Psoas muscle (tissue), 8 donors: ENCODE measurements at regions of chr18 and their contacts with region 1.

Region 1: GRCh38 chr18:23578891-23579653 is 7.2 kb downstream of the NPC1 start:
- DNase-seq: no peak
- ATAC-seq: peak in 2 of 4 donors; percentile 31 to 67
- H3K4me3 ChIP-seq: no peak overlapping the region
- H3K27ac ChIP-seq: no peak overlapping the region
- H3K4me1 ChIP-seq: peaks cover 24% of the 10 kb centered on the region
- H3K27me3 ChIP-seq: no peaks in the 10 kb centered on the region
- CTCF ChIP-seq: no peak

Region 2: DNA sequence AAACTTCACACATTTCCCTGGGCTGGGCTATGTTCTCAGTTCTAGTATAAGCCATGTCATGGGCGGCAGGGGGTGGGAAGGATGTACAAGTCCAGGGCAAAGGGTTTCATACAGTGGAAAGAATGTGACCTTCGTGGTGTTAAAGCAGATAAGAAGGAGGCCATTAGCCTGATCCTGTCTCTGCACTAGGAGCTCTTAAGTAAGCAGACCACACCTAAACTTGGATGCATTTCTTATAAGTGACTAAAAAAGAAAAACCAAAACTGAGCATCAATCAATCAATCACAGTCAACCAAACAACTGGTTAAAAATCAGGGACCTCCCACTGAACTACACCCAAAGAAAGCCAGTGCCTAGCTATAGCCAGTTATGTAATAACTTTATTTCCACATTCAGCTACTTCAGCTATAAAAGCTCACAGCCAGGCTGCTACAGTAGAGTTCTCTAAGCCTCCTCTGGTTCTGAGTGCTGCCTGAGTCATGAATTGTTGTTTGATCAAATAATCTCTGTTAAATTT is 172.7 kb before region 1 on chr18:
- intact Hi-C with region 1: no loop called
- DNase-seq: no peak
- ATAC-seq: no peak
- H3K4me3 ChIP-seq: no peak overlapping the region
- H3K27ac ChIP-seq: no peak overlapping the region
- H3K4me1 ChIP-seq: no peaks in the 10 kb centered on the region
- H3K27me3 ChIP-seq: no peaks in the 10 kb centered on the region
- CTCF ChIP-seq: no peak

Region 3: DNA sequence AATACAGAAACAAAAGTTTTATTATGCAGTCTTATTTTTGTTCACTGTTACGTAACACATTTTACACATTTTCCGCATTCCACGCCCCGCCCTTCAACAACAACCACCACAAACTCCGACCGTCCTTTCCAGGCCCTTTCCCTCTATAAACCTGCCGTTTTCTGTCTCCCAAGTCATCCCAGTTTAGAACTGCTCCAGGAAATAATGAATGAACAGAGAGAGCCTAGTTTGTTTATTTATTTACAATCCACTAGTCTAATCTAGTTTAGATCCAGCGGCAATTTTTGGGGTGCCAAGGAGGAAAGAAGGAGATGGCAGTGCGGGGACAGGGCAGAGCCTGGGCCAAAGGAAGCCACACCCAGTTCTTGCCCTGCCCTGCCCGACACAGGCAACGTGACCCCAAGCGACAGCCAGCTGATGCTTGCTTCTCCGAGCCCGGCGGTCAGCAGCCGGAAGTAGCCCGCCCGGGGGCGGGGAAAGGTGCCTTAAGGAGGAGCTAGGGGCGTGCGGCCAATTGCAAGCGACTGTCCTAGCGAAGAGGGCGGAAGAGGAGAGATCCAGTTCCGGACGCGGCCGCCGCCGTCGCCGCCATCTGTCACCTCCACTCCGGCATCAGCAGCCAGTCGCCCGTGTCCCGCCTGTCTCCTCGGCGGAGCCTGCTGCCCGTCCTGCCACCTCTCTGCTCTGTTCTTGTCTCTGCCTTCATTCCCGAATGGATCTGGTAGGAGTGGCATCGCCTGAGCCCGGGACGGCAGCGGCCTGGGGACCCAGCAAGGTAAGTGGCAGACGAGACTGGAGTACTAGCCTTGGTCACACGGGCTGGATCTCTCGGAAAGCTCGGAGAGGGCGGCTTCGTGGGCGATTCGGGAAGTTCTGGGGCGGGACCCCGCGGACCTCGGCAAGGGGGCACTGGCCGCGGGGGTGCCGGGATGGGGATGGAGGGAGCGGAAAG is 126.1 kb before region 1 on chr18 and contains the start of gene RIOK3:
- intact Hi-C with region 1: loop called in 1 of 2 experiments (anchors 5 kb)
- DNase-seq: peak; percentile 99
- ATAC-seq: peak; percentile 98 to 99 (median 99)
- H3K4me3 ChIP-seq: peak within 1 kb of the TSS; percentile 84
- H3K27ac ChIP-seq: peak within 1 kb of the TSS; percentile 95
- H3K4me1 ChIP-seq: peaks cover 43% of the 10 kb centered on the region
- H3K27me3 ChIP-seq: no peaks in the 10 kb centered on the region
- CTCF ChIP-seq: no peak
- total RNA-seq, gene RIOK3: 78.6 to 116 (median 89.1) TPM

Region 4: DNA sequence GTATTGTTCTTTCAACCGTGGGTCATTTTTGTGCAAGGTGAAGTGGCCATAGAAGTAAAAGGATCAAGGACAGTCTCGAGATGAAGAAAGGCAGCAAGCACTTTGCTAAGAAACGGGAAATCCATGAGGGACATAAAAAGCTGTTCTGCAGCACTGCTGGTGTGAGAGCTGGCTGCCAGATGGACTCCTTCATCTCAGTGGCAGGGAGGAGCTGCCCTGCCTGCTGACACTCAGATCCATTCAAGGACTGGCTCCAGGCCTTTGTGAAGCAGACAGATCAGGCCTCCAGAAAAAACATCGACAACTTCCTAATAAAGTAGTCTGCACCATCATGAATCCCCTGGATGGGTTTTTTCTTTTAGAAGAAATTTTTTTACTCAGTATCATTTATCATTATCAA is 46.2 kb before region 1 on chr18:
- intact Hi-C with region 1: loop called in 1 of 2 experiments (anchors 5 kb)
- DNase-seq: no peak
- ATAC-seq: no peak
- H3K4me3 ChIP-seq: no peak overlapping the region
- H3K27ac ChIP-seq: no peak overlapping the region
- H3K4me1 ChIP-seq: no peaks in the 10 kb centered on the region
- H3K27me3 ChIP-seq: no peaks in the 10 kb centered on the region
- CTCF ChIP-seq: no peak

Region 5: GRCh38 chr18:23596183-23596582 is 17.1 kb after region 1 on chr18:
- intact Hi-C with region 1: no loop called
- DNase-seq: no peak
- ATAC-seq: no peak
- H3K4me3 ChIP-seq: no peak overlapping the region
- H3K27ac ChIP-seq: no peak overlapping the region
- H3K4me1 ChIP-seq: no peaks in the 10 kb centered on the region
- H3K27me3 ChIP-seq: no peaks in the 10 kb centered on the region
- CTCF ChIP-seq: no peak